HEK293 (cell line): ENCODE measurements at regions of chr16 and their contacts with region 1.

Region 1: GRCh38 chr16:85717393-85718121 is 28.8 kb upstream of the GINS2 start:
- H3K4me3 ChIP-seq: no peak overlapping the region
- H3K27ac ChIP-seq: no peak overlapping the region
- H3K4me1 ChIP-seq: no peaks in the 10 kb centered on the region
- CTCF ChIP-seq: peak; percentile 73

Region 2: GRCh38 chr16:85631802-85632394 is 85.7 kb before region 1 on chr16:
- CTCF ChIA-PET with region 1: no interaction called
- POLR2A ChIA-PET with region 1: no interaction called
- H3K4me3 ChIP-seq: no peak overlapping the region
- H3K27ac ChIP-seq: no peak overlapping the region
- H3K4me1 ChIP-seq: no peaks in the 10 kb centered on the region
- CTCF ChIP-seq: no peak

Region 3: DNA sequence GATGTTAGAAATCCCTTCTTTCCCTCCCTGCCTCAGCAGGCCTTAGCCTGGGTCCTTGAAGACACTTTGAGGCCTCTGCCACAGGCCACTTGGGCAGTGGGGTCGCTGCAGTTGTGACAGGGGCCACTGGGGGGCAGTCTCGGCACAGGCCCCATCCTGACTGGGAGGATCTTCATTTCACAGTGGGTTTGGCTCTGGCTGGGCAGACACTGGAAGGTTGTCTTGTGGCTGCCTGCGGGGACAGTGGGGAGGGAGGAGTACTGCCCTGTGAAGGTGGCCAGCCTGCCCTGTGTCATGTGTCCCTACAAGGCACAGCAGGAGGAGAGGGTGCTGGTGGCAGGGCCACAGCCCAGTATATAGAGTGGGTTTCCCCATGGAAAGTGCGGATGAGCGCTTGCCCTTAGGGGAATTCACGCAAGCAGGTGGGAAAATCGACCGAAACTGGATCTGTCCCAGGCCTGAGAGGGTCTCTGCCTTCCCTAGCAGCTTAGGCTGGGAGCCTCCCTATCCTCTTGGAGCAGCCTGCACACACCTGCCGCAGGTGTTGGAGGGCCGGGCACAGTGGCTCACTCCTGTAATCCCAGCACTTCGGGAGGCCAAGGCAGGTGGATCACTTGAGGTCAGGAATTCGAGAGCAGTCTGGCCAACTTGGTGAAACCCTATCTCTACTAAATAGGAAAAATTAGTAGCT is 57.6 kb before region 1 on chr16:
- CTCF ChIA-PET with region 1: interaction called, 34 read pairs
- POLR2A ChIA-PET with region 1: no interaction called
- H3K4me3 ChIP-seq: no peak overlapping the region
- H3K27ac ChIP-seq: no peak overlapping the region
- H3K4me1 ChIP-seq: no peaks in the 10 kb centered on the region
- CTCF ChIP-seq: peak; percentile 86

Region 4: GRCh38 chr16:85675251-85675927 is 42.2 kb before region 1 on chr16:
- CTCF ChIA-PET with region 1: interaction called, 87 read pairs
- POLR2A ChIA-PET with region 1: interaction called, 4 read pairs
- H3K4me3 ChIP-seq: no peak overlapping the region
- H3K27ac ChIP-seq: no peak overlapping the region
- H3K4me1 ChIP-seq: peaks cover 11% of the 10 kb centered on the region
- CTCF ChIP-seq: no peak

Region 5: DNA sequence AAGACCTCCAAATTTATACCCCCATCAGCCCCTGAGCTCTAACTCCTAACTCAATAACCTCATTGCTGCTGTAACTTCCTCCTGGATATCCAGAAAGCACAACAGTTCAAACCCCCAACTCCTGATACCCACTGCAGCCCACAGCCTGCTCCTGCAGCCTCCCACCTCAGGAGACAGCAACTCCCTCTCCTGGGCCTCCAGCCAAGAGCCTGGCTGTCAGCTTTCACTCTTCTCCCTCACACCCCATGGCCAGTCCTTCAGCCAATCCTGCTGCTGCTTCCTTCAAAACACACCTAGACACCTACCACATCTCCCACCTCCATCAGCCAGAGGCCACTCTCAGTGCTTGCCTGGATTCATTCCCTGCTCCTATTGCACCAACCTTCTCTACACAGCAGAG is 34.2 kb before region 1 on chr16:
- CTCF ChIA-PET with region 1: interaction called, 87 read pairs
- POLR2A ChIA-PET with region 1: no interaction called
- H3K4me3 ChIP-seq: no peak overlapping the region
- H3K27ac ChIP-seq: no peak overlapping the region
- H3K4me1 ChIP-seq: no peaks in the 10 kb centered on the region; the same call in 1 of the 2 replicates
- CTCF ChIP-seq: no peak

Region 6: GRCh38 chr16:85688586-85689284 is 28.8 kb before region 1 on chr16 and contains the start of gene GINS2:
- CTCF ChIA-PET with region 1: interaction called, 10 read pairs
- POLR2A ChIA-PET with region 1: no interaction called
- H3K4me3 ChIP-seq: peak within 1 kb of the TSS; percentile 67
- H3K27ac ChIP-seq: peak within 1 kb of the TSS; percentile 87
- H3K4me1 ChIP-seq: no peaks in the 10 kb centered on the region; the same call in 1 of the 2 replicates
- CTCF ChIP-seq: 0 out of 2 replicates have a peak, but pooled peaks have one; percentile 12

Region 7: DNA sequence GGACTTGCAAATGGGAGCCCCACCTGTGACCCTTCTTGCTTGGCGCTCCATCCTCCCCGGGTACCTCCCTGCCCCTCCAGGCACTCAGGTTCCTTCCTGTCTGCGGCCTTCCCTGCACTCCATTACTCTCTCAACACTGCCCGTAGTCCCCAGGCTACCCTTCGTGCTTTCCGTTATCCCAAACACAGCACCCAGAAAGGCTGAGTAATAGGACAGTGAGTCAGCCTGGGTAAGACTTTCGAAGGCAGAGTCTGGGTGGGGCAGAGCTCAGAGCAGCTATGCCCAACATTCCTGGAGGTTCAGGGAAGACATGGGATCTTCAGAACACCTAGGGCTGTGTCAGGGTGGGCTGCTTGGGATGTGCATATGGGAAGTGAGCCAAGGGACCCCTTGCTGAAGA is 50.0 kb after region 1 on chr16:
- CTCF ChIA-PET with region 1: no interaction called
- POLR2A ChIA-PET with region 1: no interaction called
- H3K4me3 ChIP-seq: no peak overlapping the region
- H3K27ac ChIP-seq: no peak overlapping the region
- H3K4me1 ChIP-seq: no peaks in the 10 kb centered on the region
- CTCF ChIP-seq: no peak